Thyroid gland (tissue), 4 donors: ENCODE measurements at regions of chr12 and their contacts with region 1.

Region 1: DNA sequence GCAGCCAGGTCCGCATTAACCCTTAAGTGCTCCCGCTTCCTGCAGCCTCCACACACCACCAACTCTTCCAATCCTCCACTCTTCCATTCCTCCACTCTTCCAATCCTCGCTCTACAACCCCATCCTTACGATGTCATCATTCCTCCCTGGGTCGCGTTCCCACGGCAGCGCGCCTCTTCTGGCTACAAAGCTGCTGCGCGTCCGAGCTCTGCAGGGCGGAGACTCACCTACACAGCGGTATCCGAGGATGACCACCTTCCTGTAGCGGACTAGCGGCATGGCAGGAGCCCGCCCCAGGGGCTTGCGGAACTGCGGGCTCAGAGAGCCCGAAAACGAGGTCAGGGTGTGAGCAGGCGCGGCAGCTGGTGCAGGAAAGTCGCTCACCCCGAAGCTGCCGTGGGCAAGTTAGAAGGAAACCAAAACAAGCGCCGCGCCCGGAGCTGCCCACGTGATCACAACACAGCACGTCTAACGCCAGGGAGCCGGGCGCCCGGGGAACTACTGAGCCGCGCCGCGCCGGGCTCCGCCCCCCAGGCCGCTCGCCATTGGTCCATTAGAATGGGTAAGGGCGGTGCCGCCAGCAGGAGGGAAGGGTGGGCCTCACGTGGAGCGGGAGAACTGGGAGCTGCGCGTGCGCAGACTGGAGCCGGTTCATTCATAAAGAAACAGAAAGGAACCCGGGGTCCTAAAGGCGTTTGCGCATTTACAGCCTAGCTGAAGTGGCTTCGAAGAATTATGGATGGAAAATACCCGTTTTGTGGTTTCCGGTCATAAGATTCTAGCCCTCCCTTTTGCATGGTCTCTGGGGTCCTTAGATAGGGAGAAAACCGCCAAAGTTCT is at the start of gene RHEBL1:
- DNase-seq: peak; percentile 99
- H3K4me3 ChIP-seq: peak within 1 kb of the TSS; percentile 38 to 50 (median 43)
- H3K27ac ChIP-seq: peak within 1 kb of the TSS in 2 of 3 donors; percentile 15 to 55
- H3K4me1 ChIP-seq: peaks cover 5 to 8% of the 10 kb centered on the region in 2 donors
- H3K27me3 ChIP-seq: no peaks in the 10 kb centered on the region
- CTCF ChIP-seq: no peak
- POLR2A ChIP-seq: peak in 1 of 2 donors; percentile 45
- total RNA-seq, gene RHEBL1: 0.98 TPM in 1 of 4 donors, not detected in the others

Region 2: GRCh38 chr12:49110464-49111155 is 40.9 kb after region 1 on chr12 and contains the start of gene LMBR1L:
- intact Hi-C with region 1: loop called (anchors 5 kb)
- DNase-seq: peak; percentile 97
- H3K4me3 ChIP-seq: peak within 1 kb of the TSS; percentile 44 to 92 (median 87)
- H3K27ac ChIP-seq: peak within 1 kb of the TSS; percentile 92 to 98 (median 96)
- H3K4me1 ChIP-seq: peaks cover 20 to 37% of the 10 kb centered on the region in 2 donors
- H3K27me3 ChIP-seq: no peaks in the 10 kb centered on the region
- CTCF ChIP-seq: peak in 5 of 6 experiments; percentile 11 to 67 (median 56)
- POLR2A ChIP-seq: peak in 1 of 2 donors; percentile 94
- total RNA-seq, gene LMBR1L: 30.4 to 54.8 (median 46.6) TPM